ENCODE measurements at regions of chr1 and their contacts with region 1.

Region 1: DNA sequence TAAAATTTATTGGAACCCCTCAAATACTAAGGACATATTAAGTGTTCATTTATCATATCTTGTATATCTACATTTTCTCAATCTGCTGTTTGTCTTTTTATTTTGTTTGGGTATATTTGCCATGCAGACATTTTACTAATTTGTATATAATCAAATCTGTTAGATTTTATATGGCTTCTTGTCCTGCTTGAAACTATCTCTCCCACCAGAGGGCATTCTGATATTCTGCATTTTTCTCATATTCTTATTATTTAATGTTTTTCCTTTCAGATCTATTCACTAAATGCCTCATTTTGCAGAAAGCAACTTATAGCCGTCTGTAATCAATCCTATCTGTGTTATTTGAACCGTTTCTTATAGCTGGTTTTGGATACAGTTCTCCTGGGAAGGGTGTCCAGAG is 745.5 kb downstream of the LRRIQ3 start:
- DNase-seq: no peak
- H3K4me3 Mint-ChIP-seq: no peak overlapping the region
- H3K27ac Mint-ChIP-seq: no peak overlapping the region
- H3K4me1 Mint-ChIP-seq: no peaks in the 10 kb centered on the region
- H3K27me3 Mint-ChIP-seq: no peaks in the 10 kb centered on the region
- CTCF ChIP-seq: no peak

Region 2: DNA sequence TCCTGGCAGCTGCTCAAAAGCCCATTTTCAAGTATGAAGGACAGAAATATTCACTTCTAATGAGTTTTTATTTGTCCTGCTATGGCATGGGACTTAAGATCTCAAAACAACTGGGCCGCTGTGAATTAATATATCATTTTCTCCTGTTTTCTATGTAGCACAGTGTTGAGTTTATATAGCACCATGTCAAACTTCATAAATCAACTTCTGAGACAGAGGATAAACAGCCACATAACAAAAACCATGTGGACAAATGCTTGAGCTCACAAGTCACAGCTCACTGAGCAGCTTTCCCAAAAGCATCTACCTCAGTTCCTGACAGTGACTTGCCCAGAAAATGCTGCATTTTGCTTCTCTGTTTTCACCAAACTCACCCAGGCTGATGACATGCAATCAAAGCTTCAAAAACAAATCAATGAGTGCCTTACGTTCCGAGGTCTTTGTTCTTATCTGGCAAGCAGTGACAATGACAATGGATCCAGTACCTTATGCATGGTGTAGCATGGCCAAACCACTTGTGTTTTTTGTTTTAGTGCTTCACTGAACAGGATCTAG is 22.9 kb after region 1 on chr1:
- CTCF ChIA-PET with region 1: no interaction called
- intact Hi-C with region 1: no loop called
- DNase-seq: no peak
- H3K4me3 Mint-ChIP-seq: no peak overlapping the region
- H3K27ac Mint-ChIP-seq: no peak overlapping the region
- H3K4me1 Mint-ChIP-seq: no peaks in the 10 kb centered on the region
- H3K27me3 Mint-ChIP-seq: no peaks in the 10 kb centered on the region
- CTCF ChIP-seq: no peak

Region 3: DNA sequence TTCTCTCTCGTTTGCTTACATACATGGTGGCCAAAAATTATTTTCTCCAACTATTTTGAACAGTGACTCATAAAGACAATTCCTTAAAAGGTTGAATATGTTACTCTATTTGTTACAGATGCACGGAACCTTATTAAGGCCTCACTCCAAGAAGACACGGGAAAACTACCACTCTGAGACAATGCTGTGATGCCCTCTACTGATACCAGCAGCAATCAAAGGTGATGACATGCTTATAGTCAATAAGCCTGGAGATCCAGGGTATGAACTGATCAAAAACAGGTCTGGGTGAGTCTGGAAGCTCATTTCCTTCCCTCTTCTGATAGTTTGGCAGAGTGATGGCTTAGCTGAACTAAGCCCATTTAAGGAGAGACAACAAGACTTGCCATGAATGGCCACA is 182.5 kb after region 1 on chr1:
- CTCF ChIA-PET with region 1: no interaction called
- intact Hi-C with region 1: loop called (anchors 1 kb)
- DNase-seq: no peak
- H3K4me3 Mint-ChIP-seq: no peak overlapping the region
- H3K27ac Mint-ChIP-seq: no peak overlapping the region
- H3K4me1 Mint-ChIP-seq: no peaks in the 10 kb centered on the region
- H3K27me3 Mint-ChIP-seq: no peaks in the 10 kb centered on the region
- CTCF ChIP-seq: no peak

Region 4: GRCh38 chr1:74005533-74005932 is 553.0 kb after region 1 on chr1:
- CTCF ChIA-PET with region 1: no interaction called
- intact Hi-C with region 1: loop called (anchors 10 kb)
- DNase-seq: no peak
- H3K4me3 Mint-ChIP-seq: peak overlapping the region; percentile 33
- H3K27ac Mint-ChIP-seq: peak overlapping the region; percentile 30
- H3K4me1 Mint-ChIP-seq: peaks cover 20% of the 10 kb centered on the region
- H3K27me3 Mint-ChIP-seq: no peaks in the 10 kb centered on the region
- CTCF ChIP-seq: no peak